Esophagus muscularis mucosa (tissue), 4 donors: ENCODE measurements at regions of chr7 and their contacts with region 1.

Region 1: GRCh38 chr7:148084138-148084537 is 506.4 kb upstream of the C7orf33 start:
- DNase-seq: no peak
- H3K4me3 ChIP-seq: peak overlapping the region in 1 of 4 donors; percentile 4
- H3K27ac ChIP-seq: no peak overlapping the region
- H3K4me1 ChIP-seq: peaks cover 0 to 15% (median 10%) of the 10 kb centered on the region in 4 donors
- H3K27me3 ChIP-seq: no peaks in the 10 kb centered on the region
- CTCF ChIP-seq: peak; percentile 58 to 67 (median 66)
- EP300 ChIP-seq: no peak
- POLR2A ChIP-seq: no peak

Region 2: DNA sequence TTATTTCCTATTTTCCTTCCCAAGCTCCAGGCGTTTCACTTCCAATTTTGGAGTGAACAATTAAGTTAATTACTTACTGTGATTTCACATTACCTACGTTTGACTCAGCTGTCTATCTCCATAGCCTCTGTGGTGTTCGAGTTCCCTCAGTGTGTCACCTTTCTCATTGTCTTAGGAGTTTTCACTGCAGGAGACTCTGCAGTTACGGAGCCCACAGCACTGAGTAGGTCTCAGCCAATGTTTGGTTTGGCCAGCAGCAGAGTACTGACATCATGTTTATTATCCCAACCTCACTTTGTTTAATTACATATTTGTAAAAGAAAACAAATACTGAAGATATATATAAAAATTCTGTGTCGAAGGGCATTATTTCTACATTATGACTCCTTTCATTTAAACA is 843.7 kb before region 1 on chr7:
- intact Hi-C with region 1: loop called (anchors 5 kb)
- DNase-seq: no peak
- H3K4me3 ChIP-seq: no peak overlapping the region
- H3K27ac ChIP-seq: no peak overlapping the region
- H3K4me1 ChIP-seq: no peaks in the 10 kb centered on the region
- H3K27me3 ChIP-seq: no peaks in the 10 kb centered on the region
- CTCF ChIP-seq: no peak
- EP300 ChIP-seq: no peak
- POLR2A ChIP-seq: no peak

Region 3: DNA sequence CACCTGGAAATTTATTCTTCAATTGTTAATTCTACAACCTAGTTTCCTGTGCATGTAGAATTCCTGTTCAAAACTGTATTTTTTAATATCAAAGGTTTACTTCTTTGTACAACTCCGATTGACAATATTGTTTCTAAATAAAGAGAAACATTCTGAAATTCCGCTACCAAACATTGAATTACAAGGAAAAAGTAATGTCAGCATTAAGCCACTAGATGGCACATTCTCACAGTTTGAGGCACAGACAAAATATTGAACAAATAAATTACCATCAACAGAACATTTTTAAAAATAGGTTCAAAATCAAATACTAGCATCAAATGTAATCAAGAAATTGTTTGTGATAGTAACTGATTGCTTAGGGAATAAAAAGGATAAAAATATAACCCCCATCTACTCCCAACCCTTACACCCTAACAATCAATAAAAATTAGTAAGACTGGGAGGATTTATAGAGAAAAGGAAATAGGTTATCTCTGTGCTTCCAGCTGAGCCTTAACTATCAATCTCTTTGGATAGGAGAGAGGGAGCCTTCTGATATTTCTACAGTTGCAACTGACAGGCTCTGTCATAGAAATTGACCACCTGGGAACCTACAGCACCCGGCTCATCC is 419.8 kb after region 1 on chr7:
- intact Hi-C with region 1: no loop called
- DNase-seq: peak; percentile 3
- H3K4me3 ChIP-seq: no peak overlapping the region
- H3K27ac ChIP-seq: no peak overlapping the region
- H3K4me1 ChIP-seq: no peaks in the 10 kb centered on the region
- H3K27me3 ChIP-seq: peaks cover 0 to 20% (median 10%) of the 10 kb centered on the region in 4 donors
- CTCF ChIP-seq: peak; percentile 62 to 75 (median 66)
- EP300 ChIP-seq: no peak
- POLR2A ChIP-seq: no peak